Calu3 (cell line): ENCODE measurements at regions of chr12 and their contacts with region 1.

Region 1: DNA sequence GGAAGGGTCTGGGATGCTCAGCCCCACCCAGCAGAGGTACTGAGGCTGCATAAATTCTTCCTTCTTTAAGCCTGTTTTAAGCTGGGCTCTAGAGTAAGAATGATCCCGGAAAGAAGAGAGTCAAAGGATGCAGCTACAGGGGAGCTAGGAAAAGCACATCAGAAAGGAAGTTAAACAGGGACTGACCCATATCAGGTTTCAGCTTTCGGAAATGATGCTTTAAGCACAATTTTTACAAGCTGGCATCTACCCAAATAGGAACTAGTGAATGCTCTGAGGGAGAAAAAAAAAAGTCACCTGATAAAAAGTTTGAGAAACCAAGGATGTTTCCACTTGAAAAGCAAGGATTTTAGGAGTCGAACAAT is 22.0 kb downstream of the TSPAN8 start:
- DNase-seq: no peak
- H3K4me3 Mint-ChIP-seq: no peak overlapping the region
- H3K27ac Mint-ChIP-seq: peak overlapping the region; percentile 68
- H3K4me1 Mint-ChIP-seq: peaks cover 72% of the 10 kb centered on the region
- H3K27me3 Mint-ChIP-seq: no peaks in the 10 kb centered on the region
- CTCF ChIP-seq: no peak

Region 2: DNA sequence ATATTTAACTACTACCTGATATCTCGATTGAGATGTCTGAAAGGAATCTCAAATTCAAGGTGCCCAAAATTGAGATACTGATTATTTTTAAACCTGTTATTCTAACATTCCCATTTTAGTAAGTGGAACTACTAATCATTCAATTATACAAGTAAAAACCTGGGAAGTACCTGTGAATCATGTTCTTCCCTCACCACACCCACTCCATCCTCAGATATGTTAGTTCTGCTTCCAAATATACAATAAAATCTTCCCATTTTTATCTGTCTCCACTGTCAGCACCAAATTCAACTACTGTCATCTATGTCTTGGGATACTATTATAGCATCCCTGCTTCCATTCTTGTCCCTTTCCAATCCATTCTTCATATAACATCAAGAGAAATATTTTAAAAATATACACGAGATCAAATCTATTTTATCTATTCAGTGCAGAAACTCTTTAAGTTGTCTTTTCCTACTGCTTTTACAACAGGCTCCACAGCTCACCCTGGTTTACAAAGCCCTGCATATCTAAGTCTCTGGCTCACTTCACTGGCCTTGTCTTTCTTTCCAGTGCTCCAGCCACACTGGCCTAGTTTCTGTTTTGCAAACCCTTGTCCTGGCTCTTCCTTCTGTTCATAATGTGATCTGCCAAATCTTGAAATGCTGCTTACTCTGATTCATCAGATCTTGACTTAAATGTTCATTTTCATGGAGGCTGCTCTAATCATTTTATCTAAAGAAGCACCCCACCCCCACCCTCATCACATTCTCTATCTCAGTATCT is 337.6 kb before region 1 on chr12:
- CTCF ChIA-PET with region 1: no interaction called
- intact Hi-C with region 1: no loop called
- DNase-seq: no peak
- H3K4me3 Mint-ChIP-seq: no peak overlapping the region
- H3K27ac Mint-ChIP-seq: no peak overlapping the region
- H3K4me1 Mint-ChIP-seq: peaks cover 18% of the 10 kb centered on the region
- H3K27me3 Mint-ChIP-seq: no peaks in the 10 kb centered on the region
- CTCF ChIP-seq: no peak

Region 3: GRCh38 chr12:71045781-71046180 is 90.0 kb before region 1 on chr12:
- CTCF ChIA-PET with region 1: no interaction called
- intact Hi-C with region 1: loop called (anchors 1 kb)
- DNase-seq: peak; percentile 9
- H3K4me3 Mint-ChIP-seq: peak overlapping the region; percentile 9
- H3K27ac Mint-ChIP-seq: peak overlapping the region; percentile 32
- H3K4me1 Mint-ChIP-seq: peaks cover 47% of the 10 kb centered on the region
- H3K27me3 Mint-ChIP-seq: no peaks in the 10 kb centered on the region
- CTCF ChIP-seq: no peak

Region 4: DNA sequence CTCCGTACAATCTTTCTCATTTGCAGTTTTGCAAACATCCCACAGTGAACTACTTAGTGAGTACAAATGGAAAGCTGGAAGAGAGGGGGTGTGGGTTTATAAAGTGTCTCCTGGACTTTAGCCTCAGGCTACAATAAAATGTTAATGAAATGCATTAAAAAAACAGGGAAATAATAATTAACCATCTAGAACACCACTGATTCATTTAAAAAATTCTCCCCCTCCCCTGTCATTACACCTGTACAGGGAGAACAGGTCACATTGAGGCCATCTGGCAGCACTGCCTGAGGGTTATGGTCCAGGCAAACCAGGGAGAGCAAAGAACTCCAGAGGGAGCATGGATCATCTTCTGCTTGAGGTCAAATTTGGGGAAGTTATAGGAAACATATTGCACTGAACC is 74.3 kb before region 1 on chr12:
- CTCF ChIA-PET with region 1: no interaction called
- intact Hi-C with region 1: loop called (anchors 5 kb)
- DNase-seq: peak; percentile 35
- H3K4me3 Mint-ChIP-seq: peak overlapping the region; percentile 33
- H3K27ac Mint-ChIP-seq: peak overlapping the region; percentile 50
- H3K4me1 Mint-ChIP-seq: peaks cover 66% of the 10 kb centered on the region
- H3K27me3 Mint-ChIP-seq: no peaks in the 10 kb centered on the region
- CTCF ChIP-seq: no peak

Region 5: GRCh38 chr12:71157601-71158233 is 21.9 kb after region 1 on chr12 and contains the start of gene TSPAN8:
- CTCF ChIA-PET with region 1: interaction called, 6 read pairs
- intact Hi-C with region 1: loop called (anchors 2 kb)
- DNase-seq: peak; percentile 54
- H3K4me3 Mint-ChIP-seq: peak within 1 kb of the TSS; percentile 70
- H3K27ac Mint-ChIP-seq: peak within 1 kb of the TSS; percentile 88
- H3K4me1 Mint-ChIP-seq: peaks cover 61% of the 10 kb centered on the region
- H3K27me3 Mint-ChIP-seq: no peaks in the 10 kb centered on the region
- CTCF ChIP-seq: no peak
- total RNA-seq, gene TSPAN8: 289 and 384 TPM in 2 replicates

Region 6: DNA sequence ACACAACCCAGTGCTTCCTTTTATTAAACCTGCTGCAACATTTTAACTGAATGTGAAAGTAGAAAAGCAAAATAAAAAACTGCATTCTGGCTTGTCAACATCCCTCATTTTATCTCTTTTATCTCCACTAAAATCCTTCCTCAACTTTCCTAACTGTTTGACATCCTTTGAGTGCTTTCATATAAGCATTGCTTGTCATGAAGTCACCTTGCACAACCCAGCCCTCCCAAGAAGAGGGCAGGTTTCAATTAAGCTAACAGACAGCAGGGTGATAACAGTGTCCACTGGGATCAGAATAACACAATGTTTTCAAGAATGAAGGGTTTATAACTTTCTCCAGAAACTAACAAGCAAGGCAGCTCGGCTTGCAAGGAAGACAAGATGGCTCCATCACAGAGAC is 38.4 kb after region 1 on chr12:
- CTCF ChIA-PET with region 1: no interaction called
- intact Hi-C with region 1: no loop called
- DNase-seq: no peak
- H3K4me3 Mint-ChIP-seq: no peak overlapping the region
- H3K27ac Mint-ChIP-seq: no peak overlapping the region
- H3K4me1 Mint-ChIP-seq: peaks cover 23% of the 10 kb centered on the region
- H3K27me3 Mint-ChIP-seq: no peaks in the 10 kb centered on the region
- CTCF ChIP-seq: no peak

Region 7: DNA sequence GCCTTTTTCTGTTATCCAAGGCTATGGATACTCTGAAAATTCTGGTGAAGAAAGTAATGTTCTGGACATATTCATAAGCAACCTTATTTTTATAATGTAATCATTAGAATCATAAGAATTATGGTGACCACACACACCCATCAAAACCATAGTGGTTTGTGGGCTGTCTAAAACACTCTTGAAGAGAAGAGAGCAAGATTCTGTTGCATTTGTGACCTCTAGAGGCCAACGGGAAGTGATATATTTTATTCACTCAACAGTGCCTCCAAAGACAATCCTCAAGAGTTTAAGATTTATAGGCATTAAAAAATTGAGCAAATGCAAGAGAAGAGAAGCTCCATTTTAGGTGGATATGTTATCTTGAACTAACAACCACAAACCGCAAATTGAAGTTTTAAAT is 235.3 kb after region 1 on chr12:
- CTCF ChIA-PET with region 1: no interaction called
- intact Hi-C with region 1: loop called (anchors 2 kb)
- DNase-seq: peak; percentile 6
- H3K4me3 Mint-ChIP-seq: no peak overlapping the region
- H3K27ac Mint-ChIP-seq: no peak overlapping the region
- H3K4me1 Mint-ChIP-seq: no peaks in the 10 kb centered on the region
- H3K27me3 Mint-ChIP-seq: no peaks in the 10 kb centered on the region
- CTCF ChIP-seq: peak; percentile 16

Region 8: DNA sequence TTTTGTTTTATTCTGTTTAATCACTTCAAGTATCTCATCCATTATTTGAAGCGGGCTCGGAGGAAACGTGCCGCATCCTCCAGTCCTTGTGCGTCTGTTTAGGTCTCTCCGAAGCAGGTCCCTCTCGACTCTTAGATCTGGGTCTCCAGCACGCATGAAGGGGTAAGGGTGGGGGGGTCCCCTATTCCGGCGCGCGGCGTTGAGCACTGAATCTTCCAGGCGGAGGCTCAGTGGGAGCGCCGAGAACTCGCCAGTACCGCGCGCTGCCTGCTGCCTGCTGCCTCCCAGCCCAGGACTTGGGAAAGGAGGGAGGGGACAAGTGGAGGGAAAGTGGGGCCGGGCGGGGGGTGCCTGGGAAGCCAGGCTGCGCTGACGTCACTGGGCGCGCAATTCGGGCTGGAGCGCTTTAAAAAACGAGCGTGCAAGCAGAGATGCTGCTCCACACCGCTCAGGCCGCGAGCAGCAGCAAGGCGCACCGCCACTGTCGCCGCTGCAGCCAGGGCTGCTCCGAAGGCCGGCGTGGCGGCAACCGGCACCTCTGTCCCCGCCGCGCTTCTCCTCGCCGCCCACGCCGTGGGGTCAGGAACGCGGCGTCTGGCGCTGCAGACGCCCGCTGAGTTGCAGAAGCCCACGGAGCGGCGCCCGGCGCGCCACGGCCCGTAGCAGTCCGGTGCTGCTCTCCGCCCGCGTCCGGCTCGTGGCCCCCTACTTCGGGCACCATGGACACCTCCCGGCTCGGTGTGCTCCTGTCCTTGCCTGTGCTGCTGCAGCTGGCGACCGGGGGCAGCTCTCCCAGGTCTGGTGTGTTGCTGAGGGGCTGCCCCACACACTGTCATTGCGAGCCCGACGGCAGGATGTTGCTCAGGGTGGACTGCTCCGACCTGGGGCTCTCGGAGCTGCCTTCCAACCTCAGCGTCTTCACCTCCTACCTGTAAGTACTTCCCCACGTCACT is 303.8 kb after region 1 on chr12 and contains the start of gene LGR5:
- CTCF ChIA-PET with region 1: no interaction called
- intact Hi-C with region 1: no loop called
- DNase-seq: peak; percentile 32
- H3K4me3 Mint-ChIP-seq: peak within 1 kb of the TSS; percentile 82
- H3K27ac Mint-ChIP-seq: no peak within 1 kb of the TSS
- H3K4me1 Mint-ChIP-seq: peaks cover 26% of the 10 kb centered on the region
- H3K27me3 Mint-ChIP-seq: peaks cover 67% of the 10 kb centered on the region
- CTCF ChIP-seq: no peak
- total RNA-seq, gene LGR5: 0.09 and 0.10 TPM in 2 replicates